Ovary (tissue), 10 donors: ENCODE measurements at regions of chr4 and their contacts with region 1.

Region 1: GRCh38 chr4:71453531-71453930 is 114.7 kb downstream of the SLC4A4 start:
- DNase-seq: no peak
- H3K4me3 ChIP-seq: no peak overlapping the region
- H3K27ac ChIP-seq: no peak overlapping the region
- H3K4me1 ChIP-seq: no peaks in the 10 kb centered on the region
- H3K27me3 ChIP-seq: no peaks in the 10 kb centered on the region
- CTCF ChIP-seq: no peak
- EP300 ChIP-seq: no peak
- POLR2A ChIP-seq: no peak

Region 2: DNA sequence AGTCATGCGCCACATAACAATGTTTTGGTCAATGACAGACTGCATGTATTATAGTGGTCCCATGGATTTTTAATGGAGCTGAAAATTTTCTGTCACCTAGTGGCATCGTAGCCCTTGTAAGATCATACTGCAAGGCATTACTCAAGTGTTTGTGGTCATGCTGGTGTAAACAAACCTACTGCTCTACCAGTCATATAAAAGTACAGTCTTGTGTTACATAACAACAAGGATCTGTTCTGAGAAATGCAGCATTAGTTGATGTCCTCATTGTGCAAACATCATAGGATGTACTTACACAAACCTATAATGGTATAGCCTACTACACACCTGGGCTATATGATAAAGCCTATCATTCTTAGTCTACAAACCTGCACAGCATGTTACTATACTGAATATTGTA is 1581.4 kb after region 1 on chr4:
- intact Hi-C with region 1: loop called in 1 of 4 experiments (anchors 5 kb)
- DNase-seq: no peak
- H3K4me3 ChIP-seq: no peak overlapping the region
- H3K27ac ChIP-seq: no peak overlapping the region
- H3K4me1 ChIP-seq: no peaks in the 10 kb centered on the region
- H3K27me3 ChIP-seq: no peaks in the 10 kb centered on the region
- CTCF ChIP-seq: no peak
- EP300 ChIP-seq: no peak
- POLR2A ChIP-seq: no peak